ENCODE measurements at regions of chr14 and their contacts with region 1.

Region 1: GRCh38 chr14:21092273-21093011 is 6.0 kb downstream of the ZNF219 start:
- DNase-seq: peak; percentile 84 to 97 (median 93)
- ATAC-seq: peak; percentile 80
- H3K4me3 ChIP-seq: no peak overlapping the region
- H3K4me3 Mint-ChIP-seq: peak overlapping the region; percentile 38
- H3K27ac ChIP-seq: no peak overlapping the region
- H3K27ac Mint-ChIP-seq: peak overlapping the region; percentile 56
- H3K4me1 ChIP-seq: peaks cover 29% of the 10 kb centered on the region
- H3K4me1 Mint-ChIP-seq: peaks cover 39% of the 10 kb centered on the region
- H3K27me3 ChIP-seq: no peaks in the 10 kb centered on the region
- H3K27me3 Mint-ChIP-seq: no peaks in the 10 kb centered on the region
- CTCF ChIP-seq: peak; percentile 100

Region 2: GRCh38 chr14:21071225-21072030 is 21.0 kb before region 1 on chr14:
- CTCF ChIA-PET with region 1: interaction called, 63 read pairs
- POLR2A ChIA-PET with region 1: interaction called, 11 read pairs
- intact Hi-C with region 1: loop called (anchors 1 kb)
- DNase-seq: peak in 8 of 14 experiments; percentile 19 to 76 (median 50)
- ATAC-seq: peak; percentile 37
- H3K4me3 ChIP-seq: peak overlapping the region; percentile 51
- H3K4me3 Mint-ChIP-seq: peak overlapping the region; percentile 86
- H3K27ac ChIP-seq: no peak overlapping the region
- H3K27ac Mint-ChIP-seq: no peak overlapping the region
- H3K4me1 ChIP-seq: peaks cover 37% of the 10 kb centered on the region
- H3K4me1 Mint-ChIP-seq: peaks cover 37% of the 10 kb centered on the region
- H3K27me3 ChIP-seq: peaks cover 40 to 59% of the 10 kb centered on the region in 2 experiments
- H3K27me3 Mint-ChIP-seq: peaks cover 71% of the 10 kb centered on the region
- CTCF ChIP-seq: no peak